H1 (cell line): ENCODE measurements at regions of chr9 and their contacts with region 1.

Region 1: DNA sequence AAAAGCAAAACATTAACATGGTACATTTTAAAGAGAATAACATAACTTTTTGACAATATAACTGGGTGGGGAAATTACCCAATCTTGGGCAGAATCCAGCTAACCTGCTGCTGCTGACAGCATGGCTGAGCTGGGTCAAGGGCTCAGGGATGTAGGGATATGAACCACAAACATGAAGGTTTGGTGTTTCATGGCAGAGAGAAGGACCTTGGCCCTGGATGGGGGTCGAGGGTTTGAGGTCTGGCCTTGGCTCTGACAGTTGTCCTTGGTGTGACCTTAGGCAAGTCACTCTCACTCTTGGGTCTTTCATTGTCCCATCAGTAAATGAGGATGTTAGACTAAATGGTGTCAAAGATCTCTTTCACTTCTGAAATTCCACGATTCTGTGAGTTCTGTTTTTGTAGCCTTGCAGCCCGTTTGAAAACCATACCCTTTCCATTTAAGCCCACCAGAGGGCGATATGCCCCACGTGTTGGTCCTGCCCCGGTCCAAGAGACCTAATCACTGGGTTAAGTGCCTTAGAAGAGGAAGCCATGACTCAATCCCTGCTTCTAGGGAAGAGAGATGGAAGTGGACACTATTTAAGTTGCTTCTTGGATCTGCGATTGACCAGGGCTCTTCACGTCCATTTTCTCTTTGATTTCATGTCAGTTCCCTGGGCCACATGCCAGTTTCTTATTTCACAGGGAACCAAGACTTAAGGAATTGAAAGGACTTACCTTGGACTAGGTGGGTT is 56.8 kb upstream of the TEX48 start:
- DNase-seq: peak; percentile 46 to 78
- H3K4me3 ChIP-seq: no peak overlapping the region
- H3K27ac ChIP-seq: no peak overlapping the region
- H3K4me1 ChIP-seq: no peaks in the 10 kb centered on the region
- H3K27me3 ChIP-seq: no peaks in the 10 kb centered on the region
- CTCF ChIP-seq: peak; percentile 62 to 92 (median 87)
- EP300 ChIP-seq: no peak
- POLR2A ChIP-seq: no peak
- RAD21 ChIP-seq: peak; percentile 98 to 99

Region 2: DNA sequence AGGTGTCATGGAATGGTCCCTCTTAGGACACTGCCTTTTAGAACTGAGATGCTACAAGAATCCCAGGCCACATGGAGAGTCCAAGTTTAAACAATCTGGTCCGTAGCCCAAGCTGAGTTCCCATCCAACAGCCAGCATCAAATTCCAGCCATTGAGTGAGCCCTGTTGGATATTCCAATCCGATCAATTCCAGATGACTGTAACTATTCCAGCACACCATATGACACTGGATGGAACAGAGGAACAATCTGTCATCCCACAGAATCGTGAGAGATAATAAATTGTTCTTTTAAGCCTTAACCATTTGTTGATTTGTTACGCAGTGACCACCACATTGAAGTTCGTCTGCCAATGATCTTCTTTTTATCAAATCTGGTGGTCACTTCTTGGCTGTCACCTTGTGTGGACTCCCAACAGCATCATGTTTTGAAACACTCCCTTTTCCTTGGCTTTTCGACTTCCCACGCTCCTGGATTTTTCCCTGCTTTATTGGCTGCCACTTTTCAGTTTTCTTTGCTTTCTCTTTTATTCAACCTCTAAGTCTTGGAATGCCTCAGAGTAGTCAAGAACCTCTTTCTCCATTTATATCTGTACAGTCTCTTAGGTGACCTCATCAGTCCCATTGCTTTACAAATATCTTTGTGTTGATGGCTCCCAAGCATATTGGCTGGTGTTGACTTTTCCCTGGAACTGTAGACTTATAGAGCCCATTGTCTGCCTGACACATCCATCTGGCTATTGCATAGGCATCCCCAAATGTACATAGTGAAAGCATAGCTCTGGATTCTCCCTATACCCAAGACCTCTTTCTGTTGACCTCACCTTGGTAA is 21.0 kb after region 1 on chr9:
- CTCF ChIA-PET with region 1: interaction called, 10 read pairs
- POLR2A ChIA-PET with region 1: no interaction called
- DNase-seq: no peak
- H3K4me3 ChIP-seq: no peak overlapping the region
- H3K27ac ChIP-seq: no peak overlapping the region
- H3K4me1 ChIP-seq: peaks cover 0 to 4% (median 0%) of the 10 kb centered on the region in 4 experiments; a peak in 1 of 7 replicates
- H3K27me3 ChIP-seq: no peaks in the 10 kb centered on the region
- CTCF ChIP-seq: no peak
- EP300 ChIP-seq: no peak
- POLR2A ChIP-seq: no peak
- RAD21 ChIP-seq: no peak

Region 3: GRCh38 chr9:114805670-114806525 is 67.1 kb after region 1 on chr9 and contains the start of gene TNFSF15:
- CTCF ChIA-PET with region 1: no interaction called
- POLR2A ChIA-PET with region 1: no interaction called
- DNase-seq: peak; percentile 15 to 60
- H3K4me3 ChIP-seq: peak within 1 kb of the TSS in 1 of 4 experiments; percentile 30; a peak in 1 of 8 replicates
- H3K27ac ChIP-seq: no peak within 1 kb of the TSS
- H3K4me1 ChIP-seq: peaks cover 0 to 23% (median 9%) of the 10 kb centered on the region in 4 experiments
- H3K27me3 ChIP-seq: peaks cover 0 to 4% (median 0%) of the 10 kb centered on the region in 4 experiments; a peak in 1 of 7 replicates
- CTCF ChIP-seq: no peak; a peak in 1 of 4 replicates
- EP300 ChIP-seq: no peak
- POLR2A ChIP-seq: no peak
- RAD21 ChIP-seq: 0 out of 4 replicates have a peak, but pooled peaks of 1 of the 2 experiments have one; percentile 14
- total RNA-seq, gene TNFSF15: 0.11 and 0.17 TPM in 2 replicates